ENCODE measurements at regions of chr19 and their contacts with region 1.

Region 1: DNA sequence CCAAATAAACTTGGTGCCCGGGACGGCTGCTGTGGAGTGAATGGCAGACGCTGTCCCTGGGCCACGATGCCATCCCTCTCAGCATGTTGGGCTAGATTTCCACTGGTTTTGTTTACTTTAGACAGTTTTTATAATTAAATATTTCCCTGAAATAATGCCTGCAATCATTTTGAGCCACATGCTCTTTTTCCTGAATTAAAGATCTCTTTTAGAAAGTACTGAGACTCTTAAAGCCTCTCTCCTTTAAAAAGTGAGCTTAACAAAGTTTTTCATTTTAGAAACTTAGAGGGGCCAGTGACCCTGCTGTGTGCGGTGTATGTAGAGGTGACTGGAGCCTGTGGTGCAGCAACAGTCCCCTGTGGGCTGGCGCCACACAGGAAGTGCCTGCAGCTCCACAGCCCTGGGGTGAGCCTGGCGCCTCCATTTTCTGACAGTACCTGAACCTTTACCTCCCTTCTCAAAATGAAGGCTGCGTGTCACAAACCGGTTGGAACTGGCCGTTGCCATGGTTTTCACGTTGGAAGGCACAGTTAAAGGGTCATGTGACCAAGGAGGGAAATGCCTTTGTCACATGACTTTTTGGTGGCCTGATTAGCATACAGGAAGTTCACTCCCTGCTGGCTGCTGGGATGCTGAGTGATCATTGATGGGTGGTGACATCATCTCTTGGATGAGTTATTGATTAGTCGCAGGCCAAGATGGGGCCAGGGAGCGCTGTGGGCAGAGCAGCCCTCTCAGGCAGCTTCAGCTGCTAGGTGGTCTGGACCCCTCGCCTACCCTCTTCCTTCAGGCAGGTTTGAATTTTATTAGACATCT is 26.3 kb downstream of the TSSK6 start:
- DNase-seq: peak; percentile 78 to 94 (median 82)
- ATAC-seq: peak; percentile 83
- H3K4me3 ChIP-seq: no peak overlapping the region; the same call in 1 of the 2 replicates
- H3K27ac ChIP-seq: peak overlapping the region; percentile 90
- H3K4me1 ChIP-seq: peaks cover 38 to 54% of the 10 kb centered on the region in 2 experiments
- H3K27me3 ChIP-seq: no peaks in the 10 kb centered on the region
- CTCF ChIP-seq: no peak
- EP300 ChIP-seq: peak; percentile 41; the same call in 1 of the 2 replicates
- POLR2A ChIP-seq: peak; percentile 52; the same call in 1 of the 2 replicates
- RAD21 ChIP-seq: no peak

Region 2: GRCh38 chr19:19145684-19146608 is 343.1 kb before region 1 on chr19:
- CTCF ChIA-PET with region 1: interaction called, 12 read pairs
- POLR2A ChIA-PET with region 1: no interaction called
- in situ Hi-C with region 1: no loop called
- intact Hi-C with region 1: no loop called
- DNase-seq: peak; percentile 82 to 88 (median 86)
- ATAC-seq: peak; percentile 95
- H3K4me3 ChIP-seq: no peak overlapping the region
- H3K27ac ChIP-seq: 0 out of 3 replicates have a peak overlapping the region, but pooled peaks have one; percentile 28
- H3K4me1 ChIP-seq: peaks cover 0 to 19% of the 10 kb centered on the region in 2 experiments; a peak in 2 of 5 replicates
- H3K27me3 ChIP-seq: no peaks in the 10 kb centered on the region; a peak in 1 of 5 replicates
- CTCF ChIP-seq: peak; percentile 85 to 97 (median 95)
- EP300 ChIP-seq: no peak
- POLR2A ChIP-seq: no peak
- RAD21 ChIP-seq: peak; percentile 86 to 93

Region 3: GRCh38 chr19:19192078-19192882 is 296.8 kb before region 1 on chr19 and contains the starts of genes BORCS8 and RFXANK:
- CTCF ChIA-PET with region 1: no interaction called
- POLR2A ChIA-PET with region 1: no interaction called
- in situ Hi-C with region 1: no loop called
- intact Hi-C with region 1: no loop called
- DNase-seq: peak; percentile 96 to 99 (median 98)
- ATAC-seq: peak; percentile 97
- H3K4me3 ChIP-seq: peak within 1 kb of the TSS; percentile 86
- H3K27ac ChIP-seq: peak within 1 kb of the TSS; percentile 99
- H3K4me1 ChIP-seq: peaks cover 7 to 20% of the 10 kb centered on the region in 2 experiments
- H3K27me3 ChIP-seq: no peaks in the 10 kb centered on the region
- CTCF ChIP-seq: no peak
- EP300 ChIP-seq: no peak
- POLR2A ChIP-seq: peak; percentile 87
- RAD21 ChIP-seq: no peak
- polyA plus RNA-seq, gene BORCS8: 4.6 to 9.4 TPM
- polyA plus RNA-seq, gene RFXANK: 81.4 to 150 TPM

Region 4: DNA sequence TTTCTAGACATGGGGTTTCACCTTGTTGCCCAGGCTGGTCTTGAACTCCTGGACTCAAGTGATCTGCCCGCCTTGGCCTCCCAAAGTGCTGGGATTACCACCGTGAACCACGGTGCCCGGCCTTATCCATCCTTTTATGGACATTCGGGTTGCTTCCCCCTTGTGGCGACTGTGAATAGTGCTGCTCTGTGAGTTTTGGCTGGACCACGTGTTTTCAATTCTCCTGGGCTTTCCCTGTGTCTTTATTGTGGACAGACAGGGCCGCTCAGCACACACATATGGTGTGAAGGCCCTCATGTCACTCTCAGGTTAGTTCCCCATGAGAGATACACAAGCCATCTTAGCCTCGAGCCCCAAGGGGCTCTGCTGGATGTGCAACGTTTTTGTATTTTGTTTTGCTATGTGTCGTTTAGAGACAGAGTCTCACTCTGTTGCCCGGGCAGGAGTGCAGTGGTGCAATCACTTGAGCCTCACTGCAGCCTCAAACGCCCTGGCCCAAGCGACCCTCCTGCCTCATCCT is 127.9 kb before region 1 on chr19:
- CTCF ChIA-PET with region 1: interaction called, 18 read pairs
- POLR2A ChIA-PET with region 1: interaction called, 11 read pairs
- in situ Hi-C with region 1: loop called (anchors 5 kb)
- intact Hi-C with region 1: loop called (anchors 1 kb)
- DNase-seq: peak; percentile 71 to 90 (median 78)
- ATAC-seq: peak; percentile 85
- H3K4me3 ChIP-seq: no peak overlapping the region
- H3K27ac ChIP-seq: peak overlapping the region; percentile 16; the same call in 2 of the 3 replicates
- H3K4me1 ChIP-seq: peaks cover 7 to 26% of the 10 kb centered on the region in 2 experiments; a peak in 4 of 5 replicates
- H3K27me3 ChIP-seq: no peaks in the 10 kb centered on the region
- CTCF ChIP-seq: peak; percentile 78 to 84 (median 82)
- EP300 ChIP-seq: no peak
- POLR2A ChIP-seq: no peak; the same call in 1 of the 2 replicates
- RAD21 ChIP-seq: peak; percentile 34 to 60; a peak in 2 of 4 replicates

Region 5: GRCh38 chr19:19366612-19367396 is 122.3 kb before region 1 on chr19:
- CTCF ChIA-PET with region 1: interaction called, 18 read pairs
- POLR2A ChIA-PET with region 1: interaction called, 11 read pairs
- in situ Hi-C with region 1: loop called (anchors 5 kb)
- intact Hi-C with region 1: loop called (anchors 1 kb)
- DNase-seq: peak; percentile 79 to 94 (median 82)
- ATAC-seq: peak; percentile 93
- H3K4me3 ChIP-seq: no peak overlapping the region
- H3K27ac ChIP-seq: peak overlapping the region; percentile 70
- H3K4me1 ChIP-seq: peaks cover 9 to 32% of the 10 kb centered on the region in 2 experiments; a peak in 4 of 5 replicates
- H3K27me3 ChIP-seq: no peaks in the 10 kb centered on the region
- CTCF ChIP-seq: peak; percentile 94 to 99 (median 95)
- EP300 ChIP-seq: peak; percentile 51
- POLR2A ChIP-seq: peak; percentile 59
- RAD21 ChIP-seq: peak; percentile 88 to 97

Region 6: GRCh38 chr19:19385108-19385899 is 103.8 kb before region 1 on chr19:
- CTCF ChIA-PET with region 1: no interaction called
- POLR2A ChIA-PET with region 1: interaction called, 3 read pairs
- in situ Hi-C with region 1: no loop called
- intact Hi-C with region 1: loop called (anchors 5 kb)
- DNase-seq: peak; percentile 95 to 100 (median 96)
- ATAC-seq: peak; percentile 93
- H3K4me3 ChIP-seq: peak overlapping the region; percentile 96
- H3K27ac ChIP-seq: peak overlapping the region; percentile 97
- H3K4me1 ChIP-seq: peaks cover 28 to 31% of the 10 kb centered on the region in 2 experiments; a peak in 4 of 5 replicates
- H3K27me3 ChIP-seq: no peaks in the 10 kb centered on the region
- CTCF ChIP-seq: peak in 2 of 3 experiments; percentile 25 to 38; a peak in 3 of 6 replicates
- EP300 ChIP-seq: no peak; the same call in 1 of the 2 replicates
- POLR2A ChIP-seq: peak; percentile 89
- RAD21 ChIP-seq: peak; percentile 8 to 48; a peak in 2 of 4 replicates

Region 7: GRCh38 chr19:19418555-19419260 is 70.4 kb before region 1 on chr19:
- CTCF ChIA-PET with region 1: no interaction called
- POLR2A ChIA-PET with region 1: no interaction called
- in situ Hi-C with region 1: no loop called
- intact Hi-C with region 1: no loop called
- DNase-seq: peak in 1 of 4 experiments; percentile 25
- ATAC-seq: peak; percentile 18; the same call in 2 of the 3 replicates
- H3K4me3 ChIP-seq: no peak overlapping the region
- H3K27ac ChIP-seq: no peak overlapping the region
- H3K4me1 ChIP-seq: peaks cover 0 to 19% of the 10 kb centered on the region in 2 experiments; a peak in 2 of 5 replicates
- H3K27me3 ChIP-seq: no peaks in the 10 kb centered on the region
- CTCF ChIP-seq: no peak
- EP300 ChIP-seq: no peak
- POLR2A ChIP-seq: no peak
- RAD21 ChIP-seq: no peak

Region 8: DNA sequence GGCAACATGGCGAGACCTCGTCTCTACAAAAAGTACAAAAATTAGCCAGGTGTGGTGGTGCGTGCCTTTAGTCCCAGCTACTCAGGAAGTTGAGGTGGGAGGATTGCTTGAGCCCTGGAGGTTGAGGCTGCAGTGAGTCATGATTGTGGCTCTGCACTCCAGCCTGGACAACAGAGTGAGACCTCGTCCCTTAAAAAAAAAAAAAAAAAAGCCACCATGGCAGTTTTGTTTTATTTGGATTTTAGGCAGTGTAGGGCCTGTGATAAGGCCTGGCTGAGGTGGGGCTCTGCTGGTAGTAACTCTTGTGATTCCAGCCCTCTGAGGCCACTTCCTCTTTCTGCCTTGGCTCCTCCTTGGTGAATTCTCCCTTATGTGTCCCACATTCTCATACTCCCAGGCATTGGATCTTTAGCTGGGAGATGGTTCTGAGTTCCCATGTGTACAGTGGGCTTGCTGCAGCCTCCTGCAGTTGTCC is 44.4 kb before region 1 on chr19:
- CTCF ChIA-PET with region 1: no interaction called
- POLR2A ChIA-PET with region 1: no interaction called
- in situ Hi-C with region 1: no loop called
- intact Hi-C with region 1: loop called (anchors 2 kb)
- DNase-seq: peak in 2 of 4 experiments; percentile 79 to 85
- ATAC-seq: peak; percentile 91
- H3K4me3 ChIP-seq: no peak overlapping the region
- H3K27ac ChIP-seq: peak overlapping the region; percentile 73
- H3K4me1 ChIP-seq: peaks cover 46 to 47% of the 10 kb centered on the region in 2 experiments
- H3K27me3 ChIP-seq: no peaks in the 10 kb centered on the region
- CTCF ChIP-seq: no peak
- EP300 ChIP-seq: peak; percentile 74
- POLR2A ChIP-seq: no peak
- RAD21 ChIP-seq: no peak

Region 9: GRCh38 chr19:19531951-19532805 is 43.1 kb after region 1 on chr19:
- CTCF ChIA-PET with region 1: no interaction called
- POLR2A ChIA-PET with region 1: no interaction called
- in situ Hi-C with region 1: no loop called
- intact Hi-C with region 1: no loop called
- DNase-seq: peak; percentile 79 to 87 (median 80)
- ATAC-seq: peak; percentile 89
- H3K4me3 ChIP-seq: no peak overlapping the region
- H3K27ac ChIP-seq: no peak overlapping the region
- H3K4me1 ChIP-seq: peaks cover 5 to 25% of the 10 kb centered on the region in 2 experiments
- H3K27me3 ChIP-seq: no peaks in the 10 kb centered on the region
- CTCF ChIP-seq: peak; percentile 89 to 94 (median 90)
- EP300 ChIP-seq: no peak
- POLR2A ChIP-seq: 0 out of 2 replicates have a peak, but pooled peaks have one; percentile 33
- RAD21 ChIP-seq: peak; percentile 87 to 91

Measured in K562 (cell line).